Activated T-helper 2 cell treated with anti-CD3 and anti-CD28 coated beads, Interferon-gamma antibody, Interleukin-2, Interleukin-4, amounts not matched to agents 10 μg/mL and 5 μg/mL and 100 μg/mL, durations not matched to agents 14 hours and 24 hours and 36 hours (primary cell): ENCODE measurements at regions of chr3 and their contacts with region 1.

Region 1: DNA sequence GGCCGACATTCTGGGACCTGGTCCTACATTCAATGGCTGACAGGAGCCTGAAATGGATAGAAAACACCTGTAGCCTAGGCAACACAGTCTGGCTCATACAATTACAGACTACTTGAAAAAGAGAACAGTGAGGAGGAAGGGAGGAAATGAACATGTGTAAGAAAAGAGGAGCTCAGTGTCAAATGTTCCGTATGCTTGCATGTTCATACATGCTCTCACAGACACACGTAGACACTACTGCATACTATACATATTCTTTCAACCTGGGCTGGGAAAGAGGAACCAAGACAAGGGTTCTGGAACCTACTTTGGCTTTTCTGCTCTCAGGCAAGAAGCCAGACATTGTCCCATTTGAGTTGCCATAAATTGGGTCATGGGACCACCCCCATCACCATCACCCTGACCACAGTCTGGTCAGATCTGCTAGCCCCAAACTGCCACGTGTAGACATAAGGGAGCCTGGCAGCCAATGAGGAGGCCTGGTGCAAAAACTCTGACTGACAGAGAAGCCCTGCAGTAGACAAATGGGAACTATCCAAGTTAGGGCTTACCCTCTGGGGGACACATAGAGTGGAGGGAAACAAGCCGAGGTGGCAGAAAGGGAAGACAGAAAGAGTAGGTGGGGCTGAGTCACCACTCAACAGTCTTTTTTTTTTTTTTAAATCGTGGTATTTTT is 310.0 kb downstream of the SHQ1 start:
- DNase-seq: no peak
- H3K4me3 Mint-ChIP-seq: no peak overlapping the region
- H3K27ac Mint-ChIP-seq: peak overlapping the region; percentile 60
- H3K4me1 Mint-ChIP-seq: peaks cover 38% of the 10 kb centered on the region
- H3K27me3 Mint-ChIP-seq: no peaks in the 10 kb centered on the region

Region 2: GRCh38 chr3:72496051-72496670 is 42.0 kb before region 1 on chr3:
- intact Hi-C with region 1: no loop called
- DNase-seq: no peak
- H3K4me3 Mint-ChIP-seq: no peak overlapping the region
- H3K27ac Mint-ChIP-seq: peak overlapping the region; percentile 6
- H3K4me1 Mint-ChIP-seq: peaks cover 20% of the 10 kb centered on the region
- H3K27me3 Mint-ChIP-seq: no peaks in the 10 kb centered on the region

Region 3: DNA sequence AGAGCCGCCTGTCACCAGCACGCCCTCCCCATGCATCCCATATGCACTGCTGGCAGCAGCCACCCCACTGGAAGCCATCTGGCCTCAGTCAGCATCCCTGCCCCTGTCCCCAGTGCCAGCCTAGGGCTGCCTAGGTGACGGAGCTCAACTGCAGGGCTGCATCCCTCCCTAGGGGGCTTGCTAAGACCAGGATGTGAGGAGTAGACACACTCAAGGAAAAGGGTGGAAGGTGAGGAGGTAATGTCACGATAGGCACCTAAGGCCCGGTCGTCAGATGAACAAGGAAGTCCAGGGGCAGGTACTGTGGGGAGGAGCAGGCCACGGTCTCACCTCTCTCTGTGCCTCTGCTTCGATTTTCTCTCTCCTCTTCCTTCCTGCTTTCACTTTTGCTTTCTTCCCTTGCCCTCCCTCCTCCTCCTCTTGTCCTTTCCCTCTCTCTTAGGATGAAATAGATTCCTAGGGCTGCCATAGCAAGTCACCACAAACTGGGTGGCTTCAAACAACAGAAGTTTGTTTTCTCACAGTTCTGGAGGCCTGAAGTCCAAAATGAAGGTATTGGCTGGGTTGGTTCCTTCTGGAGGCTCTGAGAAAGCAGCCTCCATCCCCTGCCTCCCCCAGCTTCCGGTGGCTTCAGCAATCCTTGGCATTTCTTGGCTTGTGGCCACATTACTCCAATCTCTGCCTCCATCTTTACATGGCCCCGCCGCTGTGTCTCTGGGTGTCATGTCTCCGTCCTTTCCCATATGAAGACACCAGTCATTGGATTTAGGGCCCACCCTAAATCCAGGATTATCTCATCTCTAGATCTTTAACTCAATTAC is 11.8 kb after region 1 on chr3:
- intact Hi-C with region 1: no loop called
- DNase-seq: peak; percentile 11
- H3K4me3 Mint-ChIP-seq: peak overlapping the region; percentile 76
- H3K27ac Mint-ChIP-seq: peak overlapping the region; percentile 89
- H3K4me1 Mint-ChIP-seq: peaks cover 23% of the 10 kb centered on the region
- H3K27me3 Mint-ChIP-seq: no peaks in the 10 kb centered on the region

Region 4: DNA sequence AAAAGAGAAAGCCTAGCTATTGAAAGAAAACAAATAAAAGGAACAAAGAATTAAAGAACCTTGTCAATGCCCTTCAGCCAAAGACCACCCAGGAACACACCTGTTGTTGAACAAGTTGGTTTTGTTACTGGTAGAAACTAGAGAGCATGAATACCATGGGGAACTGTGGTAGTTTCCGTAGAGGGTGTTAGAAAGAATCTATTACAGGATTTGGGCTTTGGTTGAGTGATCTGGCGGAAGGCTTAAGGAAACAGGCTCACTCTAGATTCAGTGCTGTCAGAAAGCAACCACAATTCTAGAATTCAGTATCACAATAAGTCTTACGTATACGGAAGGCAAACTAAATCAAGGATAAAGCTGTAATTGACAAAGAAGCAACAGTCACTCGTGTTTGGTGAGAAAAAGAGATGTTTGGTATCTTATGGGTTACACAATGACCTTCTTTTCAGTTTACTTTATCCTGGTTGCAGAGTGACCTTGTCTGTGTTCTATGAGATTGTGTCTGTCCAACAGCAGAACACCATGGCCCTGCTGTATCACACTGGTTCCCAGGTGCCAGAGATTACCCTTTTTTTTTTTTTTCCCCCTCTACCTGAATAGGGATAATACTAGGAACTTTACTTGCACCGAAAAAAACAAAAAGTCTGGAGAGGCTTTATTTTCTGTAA is 44.1 kb after region 1 on chr3:
- intact Hi-C with region 1: loop called (anchors 5 kb)
- DNase-seq: no peak
- H3K4me3 Mint-ChIP-seq: no peak overlapping the region
- H3K27ac Mint-ChIP-seq: no peak overlapping the region
- H3K4me1 Mint-ChIP-seq: peaks cover 11% of the 10 kb centered on the region
- H3K27me3 Mint-ChIP-seq: peaks cover 3% of the 10 kb centered on the region

Region 5: DNA sequence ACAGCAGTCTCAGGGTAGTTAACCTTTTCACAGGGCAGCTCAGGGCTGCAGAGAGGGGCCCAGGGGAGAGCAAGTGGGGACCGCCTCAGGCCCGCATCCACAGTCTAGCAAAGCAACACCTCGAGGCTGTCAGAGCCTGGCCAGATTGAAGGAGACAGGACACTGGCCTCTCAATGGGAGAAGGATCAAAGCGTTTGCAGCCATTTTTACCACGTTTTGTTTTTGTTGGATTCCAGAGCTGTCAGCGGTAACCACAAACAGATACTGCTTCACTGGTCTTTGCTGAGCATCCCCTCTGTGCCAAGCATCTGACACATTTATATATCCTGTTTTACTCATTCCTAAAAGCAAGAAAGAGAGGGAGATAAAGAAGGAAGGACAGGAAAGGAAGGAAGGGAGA is 156.2 kb after region 1 on chr3:
- intact Hi-C with region 1: no loop called
- DNase-seq: no peak
- H3K4me3 Mint-ChIP-seq: no peak overlapping the region
- H3K27ac Mint-ChIP-seq: no peak overlapping the region
- H3K4me1 Mint-ChIP-seq: no peaks in the 10 kb centered on the region
- H3K27me3 Mint-ChIP-seq: peaks cover 6% of the 10 kb centered on the region